GM12878 (cell line): ENCODE measurements at regions of chr6 and their contacts with region 1.

Region 1: DNA sequence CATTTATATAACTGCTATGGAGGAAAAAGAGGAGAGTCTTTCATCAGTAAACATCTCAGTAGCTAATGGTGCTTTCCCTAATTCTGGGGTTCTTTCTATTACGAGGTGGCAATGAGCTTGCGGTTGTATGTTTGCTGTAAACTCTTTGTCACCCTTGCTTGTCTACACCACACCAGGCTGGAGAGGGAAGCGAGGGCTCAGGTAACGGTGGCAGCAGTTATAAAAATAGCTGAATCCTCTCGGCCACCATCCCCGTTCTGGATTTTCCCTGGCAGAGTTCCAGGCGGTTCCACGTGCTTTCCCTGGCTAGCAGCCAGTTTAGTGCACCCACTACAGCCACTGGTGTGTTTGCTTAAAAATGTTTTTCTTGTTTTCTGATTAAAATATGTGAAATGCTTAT is 39.0 kb downstream of the MAS1 start:
- DNase-seq: peak; percentile 73
- ATAC-seq: peak; percentile 81
- H3K4me3 ChIP-seq: no peak overlapping the region
- H3K27ac ChIP-seq: peak overlapping the region; percentile 77
- H3K4me1 ChIP-seq: peaks cover 25% of the 10 kb centered on the region
- H3K27me3 ChIP-seq: no peaks in the 10 kb centered on the region
- CTCF ChIP-seq: no peak
- EP300 ChIP-seq: peak; percentile 61 to 90; a peak in 2 of 4 replicates
- POLR2A ChIP-seq: no peak
- RAD21 ChIP-seq: no peak

Region 2: DNA sequence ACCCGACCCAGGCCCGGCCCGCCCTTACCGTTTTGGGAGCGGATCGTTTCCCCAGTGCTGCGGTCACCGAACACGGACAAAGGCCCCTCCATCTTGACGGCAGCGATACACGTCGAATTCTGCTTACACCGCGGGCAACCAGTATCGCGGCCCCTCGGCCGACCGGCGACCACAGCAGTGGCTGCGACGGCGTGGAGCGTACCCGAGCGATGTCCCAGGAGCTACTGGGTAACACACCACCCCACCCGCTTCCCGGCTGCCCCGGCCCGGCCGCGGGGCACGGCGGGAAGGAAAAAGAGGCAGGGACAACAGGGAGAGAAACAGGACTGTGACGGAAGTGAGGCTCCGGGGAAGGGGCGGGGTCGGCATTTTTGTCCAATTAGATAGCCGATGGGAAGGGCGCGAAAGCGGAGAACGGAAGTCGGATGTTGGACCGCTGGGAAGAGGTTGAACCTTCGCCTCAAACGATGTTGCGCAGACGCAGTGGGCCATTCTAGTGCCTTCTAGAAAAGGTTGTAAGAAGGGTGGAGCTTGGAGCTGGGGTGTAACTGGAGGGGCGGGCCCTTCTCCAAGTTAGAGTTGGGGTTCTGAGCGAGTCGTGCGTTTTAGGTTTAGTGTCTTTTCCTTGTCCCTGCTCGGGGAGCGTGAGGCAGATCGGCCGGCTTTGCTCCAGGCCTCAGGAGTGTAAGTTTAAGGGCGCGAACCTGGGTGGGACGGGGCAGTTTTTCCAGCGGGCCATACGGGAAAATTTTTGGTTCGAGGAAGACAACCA is 140.3 kb before region 1 on chr6 and contains the start of gene TCP1:
- CTCF ChIA-PET with region 1: interaction called, 3 read pairs
- POLR2A ChIA-PET with region 1: interaction called, 3 read pairs
- RAD21 ChIA-PET with region 1: interaction called, 15 read pairs
- SMC1A ChIA-PET with region 1: no interaction called
- in situ Hi-C with region 1: no loop called
- intact Hi-C with region 1: loop called (anchors 5 kb)
- DNase-seq: peak; percentile 99
- ATAC-seq: peak; percentile 86
- H3K4me3 ChIP-seq: peak within 1 kb of the TSS; percentile 90
- H3K27ac ChIP-seq: peak within 1 kb of the TSS; percentile 87
- H3K4me1 ChIP-seq: no peaks in the 10 kb centered on the region; the same call in 1 of the 2 replicates
- H3K27me3 ChIP-seq: no peaks in the 10 kb centered on the region
- CTCF ChIP-seq: no peak
- EP300 ChIP-seq: peak in 1 of 2 experiments; percentile 88; a peak in 1 of 4 replicates
- POLR2A ChIP-seq: peak; percentile 99
- RAD21 ChIP-seq: no peak
- polyA plus RNA-seq, gene TCP1: 201 to 241 TPM

Region 3: DNA sequence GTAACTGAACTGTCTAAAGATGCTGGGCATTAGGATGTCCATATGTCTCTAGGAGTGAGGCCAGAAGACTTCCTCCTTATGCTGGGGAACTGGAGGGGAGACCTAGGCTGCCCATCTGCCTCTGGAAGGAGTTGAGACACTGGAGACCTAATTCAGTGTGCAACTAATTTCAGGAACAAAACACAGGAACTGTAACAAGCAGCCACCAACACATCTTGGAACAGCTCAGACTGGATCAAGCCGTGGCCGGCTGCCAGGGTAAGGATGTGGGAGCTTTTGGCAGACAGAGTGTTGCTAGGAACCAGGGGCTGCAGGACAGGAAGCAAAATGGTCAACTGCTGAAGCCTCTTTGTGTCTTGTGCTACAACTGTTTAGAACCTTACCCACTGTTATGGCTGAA is 55.4 kb before region 1 on chr6:
- CTCF ChIA-PET with region 1: interaction called, 3 read pairs
- POLR2A ChIA-PET with region 1: interaction called, 8 read pairs
- RAD21 ChIA-PET with region 1: interaction called, 4 read pairs
- SMC1A ChIA-PET with region 1: interaction called, 12 read pairs
- in situ Hi-C with region 1: no loop called
- intact Hi-C with region 1: loop called (anchors 2 kb)
- DNase-seq: no peak
- ATAC-seq: no peak
- H3K4me3 ChIP-seq: no peak overlapping the region
- H3K27ac ChIP-seq: no peak overlapping the region
- H3K4me1 ChIP-seq: no peaks in the 10 kb centered on the region
- H3K27me3 ChIP-seq: no peaks in the 10 kb centered on the region
- CTCF ChIP-seq: no peak
- EP300 ChIP-seq: no peak
- POLR2A ChIP-seq: no peak
- RAD21 ChIP-seq: no peak

Region 4: DNA sequence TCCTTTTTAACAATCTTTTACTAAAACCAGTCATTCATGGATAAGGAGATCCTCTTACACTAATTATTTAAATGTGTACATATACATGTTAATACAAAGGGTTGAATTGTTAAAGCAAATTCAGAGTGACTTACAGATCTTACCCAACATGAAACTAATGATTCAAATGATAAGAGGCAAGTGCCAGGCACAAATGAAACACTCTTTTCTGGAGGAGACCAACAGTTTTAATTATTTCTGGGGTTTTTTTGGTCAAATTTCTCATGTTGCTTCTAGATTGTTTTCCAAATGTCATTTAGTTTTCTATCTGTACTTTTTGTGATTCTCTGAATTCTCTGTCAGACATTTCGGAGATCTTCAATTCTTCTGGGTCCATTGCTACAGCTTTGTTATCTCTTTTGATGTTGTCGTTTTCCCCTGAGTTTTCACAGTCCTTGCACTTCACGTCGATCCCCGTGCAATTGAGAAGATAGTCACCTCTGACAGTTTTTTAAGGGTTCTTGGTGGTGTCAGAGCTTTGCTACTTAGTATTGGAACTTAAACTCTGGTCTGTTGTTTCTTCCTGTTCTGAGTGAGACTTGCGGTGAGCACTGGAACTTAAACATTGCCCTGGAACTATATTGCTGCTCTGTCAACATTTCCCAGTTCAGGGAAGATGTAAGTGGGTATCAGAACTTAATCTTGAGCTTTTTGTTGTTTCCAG is 15.8 kb before region 1 on chr6:
- CTCF ChIA-PET with region 1: interaction called, 26 read pairs
- POLR2A ChIA-PET with region 1: interaction called, 10 read pairs
- RAD21 ChIA-PET with region 1: interaction called, 26 read pairs
- SMC1A ChIA-PET with region 1: interaction called, 39 read pairs
- in situ Hi-C with region 1: no loop called
- intact Hi-C with region 1: loop called (anchors 2 kb)
- DNase-seq: no peak
- ATAC-seq: peak; percentile 84
- H3K4me3 ChIP-seq: no peak overlapping the region
- H3K27ac ChIP-seq: no peak overlapping the region
- H3K4me1 ChIP-seq: peaks cover 6% of the 10 kb centered on the region
- H3K27me3 ChIP-seq: no peaks in the 10 kb centered on the region; a peak in 1 of 4 replicates
- CTCF ChIP-seq: no peak
- EP300 ChIP-seq: no peak
- POLR2A ChIP-seq: no peak
- RAD21 ChIP-seq: no peak

Region 5: GRCh38 chr6:159968440-159969203 is 38.8 kb after region 1 on chr6 and contains the start of gene IGF2R:
- CTCF ChIA-PET with region 1: interaction called, 3 read pairs
- POLR2A ChIA-PET with region 1: interaction called, 7 read pairs
- RAD21 ChIA-PET with region 1: interaction called, 6 read pairs
- SMC1A ChIA-PET with region 1: interaction called, 95 read pairs
- in situ Hi-C with region 1: no loop called
- intact Hi-C with region 1: no loop called
- DNase-seq: no peak
- ATAC-seq: peak; percentile 86
- H3K4me3 ChIP-seq: peak within 1 kb of the TSS; percentile 85
- H3K27ac ChIP-seq: peak within 1 kb of the TSS; percentile 84
- H3K4me1 ChIP-seq: 0 out of 2 replicates have a peak, but pooled peaks cover 3% of the 10 kb centered on the region
- H3K27me3 ChIP-seq: no peaks in the 10 kb centered on the region
- CTCF ChIP-seq: no peak
- EP300 ChIP-seq: no peak; a peak in 1 of 4 replicates
- POLR2A ChIP-seq: peak; percentile 94
- RAD21 ChIP-seq: 0 out of 2 replicates have a peak, but pooled peaks have one; percentile 15
- polyA plus RNA-seq, gene IGF2R: 1.00 to 1.5 TPM